ENCODE measurements at regions of chr2 and their contacts with region 1.

Region 1: DNA sequence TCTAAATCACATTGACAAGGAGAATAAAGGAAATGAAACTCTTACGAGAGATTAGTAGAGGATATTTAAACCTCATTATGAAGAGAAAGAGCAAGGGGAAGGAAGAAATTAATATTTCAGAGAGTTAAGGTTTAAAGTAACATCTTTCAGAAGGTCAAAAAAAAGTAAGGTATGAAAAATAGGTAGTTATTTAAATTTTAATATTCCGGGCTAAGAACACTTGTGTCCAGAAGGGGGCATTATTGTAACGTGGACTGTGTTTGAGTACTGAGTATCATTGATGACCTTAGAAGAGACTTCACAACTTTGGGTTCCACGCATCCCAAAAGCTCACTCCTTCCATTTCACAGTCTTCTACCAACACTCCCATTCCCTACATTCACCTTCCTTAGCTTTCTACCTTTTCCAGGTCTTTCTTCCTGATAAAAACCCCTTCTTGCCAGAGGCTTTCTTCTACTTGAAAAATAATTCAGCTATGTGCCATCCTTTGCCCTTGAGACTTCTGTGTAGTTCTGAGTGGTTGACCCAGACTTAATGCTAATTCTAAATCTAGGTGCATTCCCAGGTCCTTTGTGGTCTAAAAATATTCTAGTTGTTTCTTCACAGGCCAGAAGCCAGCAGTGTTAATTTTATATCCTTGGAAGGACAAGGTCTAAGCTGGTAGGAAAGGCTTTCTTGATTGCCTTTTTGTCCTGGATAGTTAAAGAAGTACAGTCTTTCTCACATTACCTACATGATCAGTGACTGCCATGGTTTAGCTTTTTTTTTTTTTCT is 16.5 kb downstream of the DYNC1I2 start:
- DNase-seq: peak; percentile 57
- ATAC-seq: peak; percentile 39; the same call in 1 of the 2 replicates
- H3K4me3 ChIP-seq: no peak overlapping the region
- H3K27ac ChIP-seq: no peak overlapping the region
- H3K4me1 ChIP-seq: peaks cover 7% of the 10 kb centered on the region
- H3K27me3 ChIP-seq: no peaks in the 10 kb centered on the region
- CTCF ChIP-seq: peak; percentile 66

Region 2: DNA sequence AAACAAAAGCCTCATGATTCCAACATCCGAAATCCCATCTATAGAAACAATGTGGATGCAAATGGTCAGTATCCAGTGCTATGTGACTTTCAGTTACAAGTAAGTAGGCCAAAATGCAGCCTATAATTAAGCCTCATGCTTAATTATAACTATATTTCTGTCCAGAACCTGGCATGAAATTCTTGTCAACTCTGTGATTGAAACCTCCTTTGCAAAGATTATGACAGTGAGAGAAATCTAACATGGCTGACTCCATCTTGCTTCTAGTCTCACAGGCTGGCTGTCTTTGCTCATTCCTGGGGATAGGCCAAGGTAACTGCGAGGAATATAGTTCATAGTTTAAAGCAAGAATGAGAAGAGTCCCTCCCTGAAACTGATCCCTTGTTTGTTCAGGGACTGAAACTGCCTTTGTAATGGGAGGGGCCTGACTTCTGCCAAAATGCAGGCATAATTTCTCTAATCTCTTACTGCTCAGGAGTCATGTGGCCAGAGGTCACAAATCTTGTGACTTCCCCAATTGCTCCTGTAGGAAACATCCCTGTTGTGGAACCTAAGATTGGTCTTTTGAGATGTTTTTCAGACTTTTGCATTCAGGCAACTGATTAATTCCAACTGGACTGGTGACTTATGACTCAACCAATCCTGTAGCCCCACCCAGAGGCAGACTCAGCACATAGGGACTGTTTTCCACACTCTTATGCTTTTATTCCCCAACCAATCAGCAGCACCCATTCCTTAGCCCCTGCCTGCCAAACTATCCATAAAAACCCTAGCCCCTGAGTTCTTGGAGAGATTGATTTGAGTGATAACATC is 458.6 kb before region 1 on chr2:
- CTCF ChIA-PET with region 1: no interaction called
- POLR2A ChIA-PET with region 1: no interaction called
- intact Hi-C with region 1: no loop called
- DNase-seq: peak; percentile 22
- ATAC-seq: no peak
- H3K4me3 ChIP-seq: no peak overlapping the region
- H3K27ac ChIP-seq: no peak overlapping the region
- H3K4me1 ChIP-seq: no peaks in the 10 kb centered on the region
- H3K27me3 ChIP-seq: no peaks in the 10 kb centered on the region
- CTCF ChIP-seq: peak; percentile 22; the same call in 1 of the 2 replicates

Region 3: GRCh38 chr2:171574149-171574795 is 129.5 kb before region 1 on chr2:
- CTCF ChIA-PET with region 1: interaction called, 4 read pairs
- POLR2A ChIA-PET with region 1: no interaction called
- intact Hi-C with region 1: loop called (anchors 2 kb)
- DNase-seq: peak; percentile 84
- ATAC-seq: peak; percentile 98
- H3K4me3 ChIP-seq: no peak overlapping the region
- H3K27ac ChIP-seq: no peak overlapping the region
- H3K4me1 ChIP-seq: no peaks in the 10 kb centered on the region
- H3K27me3 ChIP-seq: no peaks in the 10 kb centered on the region
- CTCF ChIP-seq: peak; percentile 96

Region 4: DNA sequence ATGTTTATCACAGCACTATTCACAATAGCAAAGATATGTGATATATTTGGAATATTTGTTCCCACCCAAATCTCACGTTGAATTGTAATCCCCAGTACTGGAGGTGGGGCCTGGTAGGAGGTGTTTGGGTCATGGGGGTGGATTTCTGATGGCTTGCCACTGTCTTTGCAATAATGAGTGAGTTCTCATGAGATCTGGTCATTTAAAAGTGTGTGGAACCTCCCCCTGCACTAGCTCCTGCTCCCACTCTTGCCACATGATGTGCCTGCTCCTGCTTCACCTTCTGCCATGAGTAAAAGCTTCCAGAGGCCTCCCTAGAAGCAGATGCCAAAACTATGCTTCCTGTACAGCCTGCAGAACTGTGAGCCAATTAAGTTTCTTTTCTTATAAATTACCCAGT is 88.7 kb before region 1 on chr2:
- CTCF ChIA-PET with region 1: no interaction called
- POLR2A ChIA-PET with region 1: interaction called, 10 read pairs
- intact Hi-C with region 1: no loop called
- DNase-seq: no peak
- ATAC-seq: no peak
- H3K4me3 ChIP-seq: no peak overlapping the region
- H3K27ac ChIP-seq: no peak overlapping the region
- H3K4me1 ChIP-seq: no peaks in the 10 kb centered on the region
- H3K27me3 ChIP-seq: no peaks in the 10 kb centered on the region
- CTCF ChIP-seq: no peak

Region 5: GRCh38 chr2:171798252-171798741 is 94.5 kb after region 1 on chr2:
- CTCF ChIA-PET with region 1: no interaction called
- POLR2A ChIA-PET with region 1: no interaction called
- intact Hi-C with region 1: loop called (anchors 10 kb)
- DNase-seq: peak; percentile 72
- ATAC-seq: peak; percentile 100
- H3K4me3 ChIP-seq: no peak overlapping the region
- H3K27ac ChIP-seq: peak overlapping the region; percentile 50
- H3K4me1 ChIP-seq: peaks cover 18% of the 10 kb centered on the region
- H3K27me3 ChIP-seq: no peaks in the 10 kb centered on the region
- CTCF ChIP-seq: 0 out of 2 replicates have a peak, but pooled peaks have one; percentile 9

Region 6: DNA sequence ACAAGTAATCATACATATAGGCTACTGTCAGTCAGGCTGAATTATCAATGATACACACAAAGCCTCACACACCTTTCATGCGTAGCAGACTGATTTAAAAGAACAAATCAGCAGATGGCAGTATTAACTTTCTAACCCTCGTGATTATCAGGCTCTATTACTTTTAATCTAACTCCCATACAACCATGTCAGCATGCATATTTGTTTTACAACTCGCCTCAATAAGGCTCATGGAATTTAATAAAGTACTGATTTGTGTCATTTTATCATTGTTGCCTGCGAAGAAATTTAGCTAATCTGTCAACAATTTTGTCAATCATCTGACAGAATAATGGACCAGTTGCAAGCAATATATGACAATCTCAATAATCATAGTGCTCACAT is 107.5 kb after region 1 on chr2:
- CTCF ChIA-PET with region 1: interaction called, 3 read pairs
- POLR2A ChIA-PET with region 1: no interaction called
- intact Hi-C with region 1: loop called (anchors 5 kb)
- DNase-seq: peak; percentile 57
- ATAC-seq: peak; percentile 82
- H3K4me3 ChIP-seq: no peak overlapping the region
- H3K27ac ChIP-seq: no peak overlapping the region
- H3K4me1 ChIP-seq: no peaks in the 10 kb centered on the region
- H3K27me3 ChIP-seq: no peaks in the 10 kb centered on the region
- CTCF ChIP-seq: peak; percentile 61

Region 7: GRCh38 chr2:171922230-171923022 is 218.7 kb after region 1 on chr2 and contains the start of gene HAT1:
- CTCF ChIA-PET with region 1: interaction called, 4 read pairs
- POLR2A ChIA-PET with region 1: no interaction called
- intact Hi-C with region 1: loop called (anchors 5 kb)
- DNase-seq: peak; percentile 98
- ATAC-seq: peak; percentile 94
- H3K4me3 ChIP-seq: peak within 1 kb of the TSS; percentile 86
- H3K27ac ChIP-seq: peak within 1 kb of the TSS; percentile 72
- H3K4me1 ChIP-seq: peaks cover 19% of the 10 kb centered on the region
- H3K27me3 ChIP-seq: no peaks in the 10 kb centered on the region
- CTCF ChIP-seq: no peak
- total RNA-seq, gene HAT1: 58.7 and 76.8 TPM in 2 replicates

Region 8: DNA sequence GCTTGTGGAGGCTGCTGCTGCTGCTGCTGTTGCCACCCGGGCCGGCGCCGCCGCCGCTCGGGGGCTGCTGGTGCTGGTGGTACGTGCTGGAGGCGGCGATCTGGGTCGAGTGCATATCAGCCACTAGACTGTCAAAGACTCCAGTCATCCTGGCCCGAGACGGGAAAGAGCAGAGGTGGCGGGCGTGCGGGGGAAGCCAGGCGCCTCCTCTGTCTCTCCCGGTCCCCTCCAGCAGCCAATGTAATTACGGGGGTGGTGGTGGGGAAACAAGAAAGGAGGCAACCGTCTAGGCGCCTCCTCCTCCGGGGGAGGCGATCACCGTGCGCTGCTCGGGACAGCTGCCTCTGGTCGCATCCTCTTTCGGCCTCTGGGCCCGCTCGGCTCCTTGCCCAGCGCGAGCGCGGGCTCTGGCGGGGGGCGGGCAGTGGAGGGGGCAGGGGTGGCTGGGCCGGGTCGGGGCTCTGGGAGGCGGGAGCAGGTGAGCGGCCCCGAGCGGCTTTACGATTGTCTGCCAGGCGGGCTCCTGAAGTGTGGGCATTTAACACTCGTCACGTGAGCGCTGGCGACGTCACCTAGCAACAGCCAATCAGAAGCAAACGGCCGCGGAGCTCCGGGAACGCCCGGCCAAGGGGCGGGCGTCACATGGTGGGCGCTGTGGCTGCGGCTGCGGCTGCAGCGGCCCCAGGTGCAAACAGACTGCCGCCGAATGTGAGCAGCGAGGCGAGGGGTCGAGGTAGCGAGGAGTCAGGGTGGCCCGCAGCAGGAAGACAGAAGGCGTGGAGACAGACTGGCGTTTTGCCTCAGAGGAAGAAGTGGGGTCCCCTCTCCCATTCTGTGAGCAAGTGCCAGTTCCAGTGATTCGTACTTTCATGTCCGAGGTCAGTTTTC is 398.9 kb after region 1 on chr2 and contains the start of gene DLX2:
- CTCF ChIA-PET with region 1: interaction called, 4 read pairs
- POLR2A ChIA-PET with region 1: no interaction called
- intact Hi-C with region 1: loop called (anchors 1 kb)
- DNase-seq: peak; percentile 92
- ATAC-seq: peak; percentile 50
- H3K4me3 ChIP-seq: peak within 1 kb of the TSS; percentile 78
- H3K27ac ChIP-seq: no peak within 1 kb of the TSS
- H3K4me1 ChIP-seq: peaks cover 31% of the 10 kb centered on the region
- H3K27me3 ChIP-seq: no peaks in the 10 kb centered on the region
- CTCF ChIP-seq: no peak
- total RNA-seq, gene DLX2: 0.29 and 1.4 TPM in 2 replicates

Measured in PC-3 (cell line).